ENCODE measurements at regions of chr13 and their contacts with region 1.

Region 1: DNA sequence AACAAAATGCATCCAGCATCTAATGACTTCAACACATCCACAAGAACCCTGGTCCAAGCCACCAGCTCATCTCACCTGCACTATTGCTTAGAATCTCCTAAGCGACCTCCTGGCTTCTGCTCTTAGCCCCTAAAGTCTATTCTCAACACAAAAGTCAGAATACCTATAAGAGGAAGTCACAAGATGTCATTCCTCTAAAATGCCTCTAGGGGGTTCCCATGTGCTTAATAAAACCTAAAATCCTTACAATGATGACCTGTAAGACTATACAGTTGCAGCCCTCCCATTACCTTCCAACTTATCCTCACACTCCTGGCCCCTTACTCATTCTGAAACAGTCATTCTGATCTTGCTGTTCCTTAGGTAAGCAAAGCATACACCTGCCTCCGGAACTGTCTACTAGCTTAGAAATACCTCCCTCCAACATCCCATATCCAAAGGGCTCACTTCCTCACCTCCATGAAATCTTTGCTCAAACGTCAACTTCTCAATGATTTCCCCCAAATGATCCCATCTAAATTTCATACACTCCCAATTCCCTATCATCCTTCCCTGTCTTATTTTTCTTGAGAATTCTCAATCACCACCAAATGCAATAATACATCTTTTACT is 10.0 kb downstream of the ATP7B start:
- DNase-seq: no peak
- ATAC-seq: peak; percentile 47
- H3K4me3 ChIP-seq: no peak overlapping the region
- H3K27ac ChIP-seq: no peak overlapping the region
- H3K4me1 ChIP-seq: peaks cover 33% of the 10 kb centered on the region
- H3K27me3 ChIP-seq: no peaks in the 10 kb centered on the region
- CTCF ChIP-seq: peak in 6 of 7 experiments; percentile 55 to 72 (median 65)
- POLR2A ChIP-seq: no peak

Region 2: GRCh38 chr13:51562011-51562671 is 439.1 kb before region 1 on chr13:
- intact Hi-C with region 1: no loop called
- DNase-seq: peak in 1 of 4 donors; percentile 32
- ATAC-seq: no peak
- H3K4me3 ChIP-seq: no peak overlapping the region
- H3K27ac ChIP-seq: no peak overlapping the region
- H3K4me1 ChIP-seq: no peaks in the 10 kb centered on the region
- H3K27me3 ChIP-seq: no peaks in the 10 kb centered on the region
- CTCF ChIP-seq: no peak
- POLR2A ChIP-seq: no peak

Region 3: DNA sequence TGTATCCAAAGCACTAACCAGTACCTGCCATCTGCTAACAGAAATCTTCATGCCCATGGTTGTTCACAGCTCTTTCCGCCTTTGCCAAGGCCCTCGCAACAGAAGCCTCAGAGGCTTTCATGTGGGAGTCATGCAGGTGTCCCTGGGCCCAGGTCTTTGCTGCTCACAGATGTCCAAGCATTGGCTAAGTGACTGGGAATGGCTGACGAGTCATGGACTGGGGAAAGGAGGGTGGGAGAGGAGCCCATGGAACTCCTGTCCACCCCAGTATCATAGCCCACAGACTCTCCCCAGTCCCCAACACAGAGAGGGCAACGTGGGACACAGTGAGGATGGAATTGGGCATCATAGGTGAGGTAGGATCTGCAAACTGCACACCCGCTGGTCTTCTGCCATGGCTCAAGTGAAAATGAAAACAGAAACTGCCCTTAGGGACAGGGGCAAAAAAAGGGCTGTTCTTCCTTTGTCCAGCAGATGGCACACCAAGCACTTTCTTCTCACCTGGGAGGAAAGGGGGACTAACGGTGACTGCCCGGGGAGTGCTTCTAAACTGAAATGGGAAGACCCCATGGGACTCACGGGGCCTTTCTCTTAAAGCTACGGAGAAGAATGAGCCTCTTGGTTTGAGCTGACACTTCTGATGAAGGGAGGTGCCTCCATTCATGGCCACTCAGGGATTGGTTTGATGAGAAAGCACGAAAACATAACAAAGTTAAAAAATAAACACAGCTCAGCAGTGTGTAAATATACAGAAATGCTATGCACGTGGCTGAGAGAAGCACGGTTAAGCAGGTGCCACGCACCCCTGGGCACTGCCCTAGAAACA is 186.2 kb before region 1 on chr13:
- intact Hi-C with region 1: loop called (anchors 10 kb)
- DNase-seq: peak; percentile 76 to 83 (median 80)
- ATAC-seq: peak; percentile 91
- H3K4me3 ChIP-seq: no peak overlapping the region
- H3K27ac ChIP-seq: peak overlapping the region; percentile 66 to 80 (median 68)
- H3K4me1 ChIP-seq: peaks cover 15% of the 10 kb centered on the region
- H3K27me3 ChIP-seq: no peaks in the 10 kb centered on the region
- CTCF ChIP-seq: peak; percentile 71 to 89 (median 83)
- POLR2A ChIP-seq: peak in 1 of 3 donors; percentile 42